ENCODE measurements at regions of chr3 and their contacts with region 1.

Region 1: GRCh38 chr3:21013566-21013965 is 737.4 kb downstream of the ZNF385D start:
- DNase-seq: no peak
- ATAC-seq: no peak
- H3K4me3 ChIP-seq: no peak overlapping the region
- H3K27ac ChIP-seq: no peak overlapping the region
- H3K4me1 ChIP-seq: no peaks in the 10 kb centered on the region
- H3K27me3 ChIP-seq: no peaks in the 10 kb centered on the region
- CTCF ChIP-seq: no peak
- POLR2A ChIP-seq: no peak

Region 2: DNA sequence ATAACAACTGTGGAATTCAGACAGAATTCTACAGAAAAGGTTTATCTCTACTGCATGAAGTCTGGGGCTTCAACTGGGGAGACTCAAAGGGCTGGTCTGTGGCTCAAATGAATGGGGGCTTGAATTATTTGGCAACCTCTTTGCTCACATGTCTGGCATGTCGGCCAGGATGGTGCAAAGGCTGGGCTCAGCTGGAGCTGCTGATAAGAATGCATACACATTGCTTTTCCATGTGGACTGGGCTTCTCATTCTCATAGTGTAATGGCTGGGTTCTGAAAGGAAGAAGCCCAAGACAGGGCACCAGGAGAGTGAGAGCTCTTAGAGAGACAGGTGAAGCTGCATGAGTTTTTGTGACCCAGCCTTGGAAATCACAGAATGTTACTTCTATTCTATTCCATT is 633.3 kb before region 1 on chr3:
- intact Hi-C with region 1: loop called in 1 of 10 experiments (anchors 5 kb)
- DNase-seq: peak in 1 of 5 donors; percentile 25
- ATAC-seq: no peak
- H3K4me3 ChIP-seq: no peak overlapping the region
- H3K27ac ChIP-seq: no peak overlapping the region
- H3K4me1 ChIP-seq: peaks cover 0 to 10% (median 0%) of the 10 kb centered on the region in 12 donors
- H3K27me3 ChIP-seq: no peaks in the 10 kb centered on the region
- CTCF ChIP-seq: no peak
- POLR2A ChIP-seq: no peak

Region 3: DNA sequence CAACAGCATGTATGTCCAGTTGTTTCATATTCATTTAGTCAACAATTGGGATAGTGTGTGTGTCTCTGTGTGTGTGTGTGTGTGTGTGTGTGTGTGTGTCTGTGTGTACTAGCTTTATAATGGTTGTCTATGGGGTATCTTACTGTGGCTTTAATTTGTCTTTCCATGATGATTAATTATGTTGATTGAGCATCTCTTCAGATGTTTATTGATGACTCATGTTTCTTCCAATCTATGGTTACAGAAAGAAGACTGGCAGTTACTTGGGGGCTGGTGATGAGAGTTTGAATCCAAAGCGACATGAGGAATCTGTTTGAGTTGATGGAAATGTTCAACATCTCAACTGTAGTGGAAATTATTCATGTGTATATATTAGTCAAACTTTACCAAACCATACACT is 297.3 kb after region 1 on chr3:
- intact Hi-C with region 1: no loop called
- DNase-seq: no peak
- ATAC-seq: no peak
- H3K4me3 ChIP-seq: no peak overlapping the region
- H3K27ac ChIP-seq: no peak overlapping the region
- H3K4me1 ChIP-seq: no peaks in the 10 kb centered on the region
- H3K27me3 ChIP-seq: no peaks in the 10 kb centered on the region
- CTCF ChIP-seq: no peak
- POLR2A ChIP-seq: no peak

Region 4: GRCh38 chr3:21390136-21390535 is 376.6 kb after region 1 on chr3:
- intact Hi-C with region 1: no loop called
- DNase-seq: no peak
- ATAC-seq: no peak
- H3K4me3 ChIP-seq: no peak overlapping the region
- H3K27ac ChIP-seq: no peak overlapping the region
- H3K4me1 ChIP-seq: peaks cover 0 to 15% (median 0%) of the 10 kb centered on the region in 12 donors
- H3K27me3 ChIP-seq: no peaks in the 10 kb centered on the region
- CTCF ChIP-seq: no peak
- POLR2A ChIP-seq: no peak

Measured in heart left ventricle (tissue), 16 donors.